RWPE1 (cell line): ENCODE measurements at regions of chr17 and their contacts with region 1.

Region 1: GRCh38 chr17:59040199-59040598 is 66.5 kb downstream of the TRIM37 start:
- DNase-seq: no peak
- H3K27ac ChIP-seq: no peak overlapping the region
- CTCF ChIP-seq: no peak

Region 2: GRCh38 chr17:58808645-58809563 is 231.3 kb before region 1 on chr17:
- CTCF ChIA-PET with region 1: no interaction called
- POLR2A ChIA-PET with region 1: no interaction called
- DNase-seq: no peak
- H3K27ac ChIP-seq: no peak overlapping the region
- CTCF ChIP-seq: no peak

Region 3: GRCh38 chr17:58920642-58921172 is 119.5 kb before region 1 on chr17:
- CTCF ChIA-PET with region 1: no interaction called
- POLR2A ChIA-PET with region 1: interaction called, 12 read pairs
- DNase-seq: no peak
- H3K27ac ChIP-seq: no peak overlapping the region
- CTCF ChIP-seq: no peak